PC-9 (cell line): ENCODE measurements at regions of chr5 and their contacts with region 1.

Region 1: DNA sequence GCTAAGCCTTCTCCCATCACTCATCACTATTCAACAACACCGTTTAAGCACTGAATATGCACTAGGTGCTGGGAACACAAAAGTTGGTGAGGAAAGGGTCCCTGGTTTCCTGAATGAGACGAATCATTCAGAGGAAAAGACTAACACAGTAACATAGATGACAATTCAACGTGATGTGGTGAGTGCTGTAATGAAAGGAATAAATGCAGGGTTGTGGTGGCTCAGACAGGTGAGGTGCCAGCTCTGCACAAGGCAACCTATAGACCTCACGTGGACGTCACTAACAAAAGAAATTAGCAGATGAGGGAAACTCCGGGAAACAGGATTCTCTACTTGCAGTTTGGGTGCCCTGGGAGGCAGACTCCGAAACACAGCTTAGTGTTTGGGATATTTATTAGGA is 40.0 kb upstream of the ERBIN start:
- DNase-seq: no peak
- H3K4me3 ChIP-seq: peak overlapping the region; percentile 47; the same call in 1 of the 2 replicates
- H3K27ac ChIP-seq: peak overlapping the region; percentile 80
- H3K4me1 ChIP-seq: peaks cover 25% of the 10 kb centered on the region
- H3K27me3 ChIP-seq: no peaks in the 10 kb centered on the region
- CTCF ChIP-seq: no peak

Region 2: DNA sequence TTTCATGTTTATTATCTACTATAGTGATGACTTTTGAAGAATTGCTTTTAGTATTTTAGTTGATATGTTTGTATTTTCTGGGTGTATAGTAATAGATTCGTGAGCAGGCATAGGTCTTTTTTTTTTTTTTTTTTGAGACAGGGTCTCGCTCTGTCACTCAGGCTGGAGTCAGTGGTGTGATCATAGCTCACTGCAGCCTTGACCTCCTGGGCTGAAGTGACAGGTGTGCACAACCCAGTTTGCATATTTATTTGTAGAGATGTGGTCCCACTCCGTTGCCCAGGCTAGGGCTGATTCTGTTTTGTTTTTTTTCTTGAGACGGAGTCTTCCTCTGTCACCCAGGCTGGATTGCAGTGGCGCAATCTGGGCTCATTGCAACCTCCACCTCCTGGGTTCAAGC is 51.9 kb after region 1 on chr5:
- CTCF ChIA-PET with region 1: no interaction called
- POLR2A ChIA-PET with region 1: interaction called, 11 read pairs
- intact Hi-C with region 1: no loop called
- DNase-seq: no peak
- H3K4me3 ChIP-seq: no peak overlapping the region
- H3K27ac ChIP-seq: no peak overlapping the region
- H3K4me1 ChIP-seq: no peaks in the 10 kb centered on the region
- H3K27me3 ChIP-seq: no peaks in the 10 kb centered on the region
- CTCF ChIP-seq: no peak